Calu3 (cell line): ENCODE measurements at regions of chr1 and their contacts with region 1.

Region 1: DNA sequence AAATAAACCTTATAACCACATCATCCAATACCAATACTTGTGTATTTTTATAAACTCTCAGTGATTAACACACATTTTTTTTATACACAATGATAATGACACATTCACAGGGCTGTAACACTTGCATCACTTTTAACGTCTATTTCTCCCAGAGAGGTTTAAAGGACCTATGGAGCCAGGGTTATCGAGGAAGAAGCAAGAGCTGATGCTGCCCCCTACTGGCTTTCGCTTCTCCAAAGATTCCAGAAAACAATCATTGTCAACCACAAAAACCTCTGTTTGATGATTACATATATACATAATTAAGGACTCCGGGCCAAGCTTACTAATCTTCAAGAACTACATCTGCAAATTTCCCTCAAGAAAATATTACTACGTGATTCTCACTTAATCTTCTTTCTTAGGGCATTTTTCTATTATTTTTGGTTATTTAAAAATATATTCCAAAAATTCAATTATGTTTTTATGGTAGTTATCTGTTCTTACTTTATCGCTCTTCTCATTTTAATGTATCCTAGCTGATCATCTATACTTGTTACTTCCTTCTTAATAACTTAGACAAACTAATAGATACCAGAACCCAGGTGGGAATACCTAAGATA is 214.5 kb downstream of the VAV3 start:
- DNase-seq: peak; percentile 67
- H3K4me3 Mint-ChIP-seq: no peak overlapping the region
- H3K27ac Mint-ChIP-seq: no peak overlapping the region
- H3K4me1 Mint-ChIP-seq: no peaks in the 10 kb centered on the region
- H3K27me3 Mint-ChIP-seq: no peaks in the 10 kb centered on the region
- CTCF ChIP-seq: peak; percentile 54

Region 2: GRCh38 chr1:107153014-107153413 is 597.4 kb before region 1 on chr1:
- CTCF ChIA-PET with region 1: no interaction called
- intact Hi-C with region 1: loop called (anchors 10 kb)
- DNase-seq: peak; percentile 17
- H3K4me3 Mint-ChIP-seq: no peak overlapping the region
- H3K27ac Mint-ChIP-seq: no peak overlapping the region
- H3K4me1 Mint-ChIP-seq: no peaks in the 10 kb centered on the region
- H3K27me3 Mint-ChIP-seq: no peaks in the 10 kb centered on the region
- CTCF ChIP-seq: no peak

Region 3: DNA sequence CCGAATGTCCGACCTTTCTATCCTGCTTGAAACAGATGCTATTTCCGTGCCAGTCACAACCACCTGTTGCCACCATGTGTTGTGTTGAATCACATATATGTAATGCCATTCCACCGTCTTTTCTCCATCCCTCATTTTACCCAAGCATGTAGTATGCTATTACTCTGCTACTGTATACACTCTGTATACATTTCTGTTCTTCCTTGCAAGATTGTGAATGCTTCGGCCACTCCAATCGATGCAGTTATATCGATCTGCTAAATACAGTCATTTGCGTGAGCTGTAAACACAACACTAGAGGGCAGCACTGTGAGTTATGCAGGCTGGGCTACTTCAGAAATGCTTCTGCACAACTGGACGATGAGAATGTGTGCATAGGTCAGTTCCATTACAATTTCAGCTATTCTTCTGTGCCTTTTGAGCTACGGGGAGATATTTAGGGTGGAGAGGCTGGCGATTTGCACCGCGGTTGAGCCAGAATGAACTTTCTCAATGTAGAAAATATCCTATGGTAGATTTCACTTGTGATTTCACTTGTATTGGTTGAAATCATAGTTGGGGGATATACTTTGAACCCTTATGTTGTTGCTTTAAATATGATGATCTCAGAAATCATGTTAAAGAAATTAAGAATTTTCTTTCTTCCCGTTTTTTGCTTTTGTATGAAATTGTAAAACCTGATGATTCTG is 319.8 kb before region 1 on chr1:
- CTCF ChIA-PET with region 1: interaction called, 6 read pairs
- intact Hi-C with region 1: loop called (anchors 1 kb)
- DNase-seq: peak; percentile 57
- H3K4me3 Mint-ChIP-seq: peak overlapping the region; percentile 62
- H3K27ac Mint-ChIP-seq: peak overlapping the region; percentile 33
- H3K4me1 Mint-ChIP-seq: peaks cover 8% of the 10 kb centered on the region
- H3K27me3 Mint-ChIP-seq: no peaks in the 10 kb centered on the region
- CTCF ChIP-seq: peak; percentile 62

Region 4: GRCh38 chr1:107547363-107548155 is 202.9 kb before region 1 on chr1:
- CTCF ChIA-PET with region 1: no interaction called
- intact Hi-C with region 1: no loop called
- DNase-seq: no peak
- H3K4me3 Mint-ChIP-seq: no peak overlapping the region
- H3K27ac Mint-ChIP-seq: no peak overlapping the region
- H3K4me1 Mint-ChIP-seq: peaks cover 7% of the 10 kb centered on the region
- H3K27me3 Mint-ChIP-seq: no peaks in the 10 kb centered on the region
- CTCF ChIP-seq: no peak

Region 5: GRCh38 chr1:107590900-107591633 is 159.4 kb before region 1 on chr1:
- CTCF ChIA-PET with region 1: interaction called, 3 read pairs
- intact Hi-C with region 1: loop called (anchors 2 kb)
- DNase-seq: no peak
- H3K4me3 Mint-ChIP-seq: no peak overlapping the region
- H3K27ac Mint-ChIP-seq: no peak overlapping the region
- H3K4me1 Mint-ChIP-seq: peaks cover 26% of the 10 kb centered on the region
- H3K27me3 Mint-ChIP-seq: no peaks in the 10 kb centered on the region
- CTCF ChIP-seq: no peak

Region 6: GRCh38 chr1:107688354-107688753 is 62.1 kb before region 1 on chr1:
- CTCF ChIA-PET with region 1: interaction called, 3 read pairs
- intact Hi-C with region 1: loop called (anchors 2 kb)
- DNase-seq: peak; percentile 44
- H3K4me3 Mint-ChIP-seq: peak overlapping the region; percentile 77
- H3K27ac Mint-ChIP-seq: peak overlapping the region; percentile 95
- H3K4me1 Mint-ChIP-seq: peaks cover 31% of the 10 kb centered on the region
- H3K27me3 Mint-ChIP-seq: no peaks in the 10 kb centered on the region
- CTCF ChIP-seq: no peak